ENCODE measurements at regions of chr3 and their contacts with region 1.

Region 1: DNA sequence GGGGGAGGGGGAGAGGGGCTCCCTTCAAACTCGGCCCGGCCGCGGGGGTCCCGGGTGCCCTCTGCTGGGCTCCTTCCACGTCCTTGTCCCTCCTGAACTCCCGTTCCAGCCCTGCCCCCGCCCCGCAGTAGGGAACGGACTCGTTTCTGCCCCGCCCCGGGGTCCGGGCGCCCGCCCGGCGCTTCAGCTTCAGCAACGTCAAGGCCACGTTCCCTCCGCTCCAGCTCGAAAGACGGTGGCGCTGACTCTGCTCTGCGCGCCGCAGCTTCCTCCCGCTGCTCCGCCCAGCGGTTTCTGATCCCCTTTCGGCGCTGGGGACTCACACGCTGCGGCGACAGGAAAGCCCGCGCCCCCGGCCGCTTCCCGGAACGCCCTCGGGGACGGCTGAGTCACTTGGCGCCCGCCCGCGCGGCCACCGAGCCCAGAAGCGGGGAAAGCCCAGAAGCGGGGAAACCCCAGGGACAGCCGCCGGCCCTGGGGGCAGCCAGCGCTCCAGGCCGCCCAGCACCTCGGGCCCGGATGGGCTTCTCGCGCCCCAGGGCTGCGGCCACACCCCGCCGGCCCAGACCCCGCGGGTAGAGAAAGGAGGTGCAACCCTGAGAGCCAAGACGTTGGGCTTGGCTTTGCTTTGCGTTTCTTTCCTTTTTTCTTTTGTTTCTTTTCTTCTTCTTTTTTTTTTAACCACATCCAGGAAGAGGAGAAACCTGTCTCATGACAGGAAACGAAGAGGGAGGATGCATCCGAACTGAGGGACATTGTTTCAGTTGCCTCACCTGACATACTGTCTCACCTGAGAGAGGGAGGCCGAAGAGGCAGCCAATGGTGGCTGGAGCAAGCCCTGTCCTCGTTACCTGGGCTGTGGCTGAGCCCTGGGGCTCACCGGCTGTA is 28.9 kb downstream of the ARHGAP31 start:
- DNase-seq: peak; percentile 90 to 95
- ATAC-seq: peak; percentile 85 to 94 (median 89)
- H3K4me3 ChIP-seq: peak overlapping the region; percentile 83
- H3K4me3 Mint-ChIP-seq: peak overlapping the region; percentile 98
- H3K27ac ChIP-seq: peak overlapping the region; percentile 92
- H3K27ac Mint-ChIP-seq: peak overlapping the region; percentile 97 to 98
- H3K4me1 ChIP-seq: peaks cover 15% of the 10 kb centered on the region
- H3K4me1 Mint-ChIP-seq: peaks cover 12 to 31% of the 10 kb centered on the region in 2 donors
- H3K27me3 ChIP-seq: no peaks in the 10 kb centered on the region
- H3K27me3 Mint-ChIP-seq: no peaks in the 10 kb centered on the region
- CTCF ChIP-seq: no peak

Region 2: GRCh38 chr3:119240591-119241434 is 82.3 kb before region 1 on chr3 and contains the start of gene B4GALT4:
- intact Hi-C with region 1: loop called (anchors 2 kb)
- DNase-seq: peak; percentile 79 to 80
- ATAC-seq: peak; percentile 78 to 91 (median 84)
- H3K4me3 ChIP-seq: peak within 1 kb of the TSS; percentile 49
- H3K4me3 Mint-ChIP-seq: peak within 1 kb of the TSS; percentile 96
- H3K27ac ChIP-seq: peak within 1 kb of the TSS; percentile 79
- H3K27ac Mint-ChIP-seq: peak within 1 kb of the TSS; percentile 92 to 96
- H3K4me1 ChIP-seq: peaks cover 37% of the 10 kb centered on the region
- H3K4me1 Mint-ChIP-seq: peaks cover 29 to 37% of the 10 kb centered on the region in 2 donors
- H3K27me3 ChIP-seq: no peaks in the 10 kb centered on the region
- H3K27me3 Mint-ChIP-seq: no peaks in the 10 kb centered on the region
- CTCF ChIP-seq: no peak
- total RNA-seq, gene B4GALT4: 35.1 to 54.1 (median 48.8) TPM

Region 3: DNA sequence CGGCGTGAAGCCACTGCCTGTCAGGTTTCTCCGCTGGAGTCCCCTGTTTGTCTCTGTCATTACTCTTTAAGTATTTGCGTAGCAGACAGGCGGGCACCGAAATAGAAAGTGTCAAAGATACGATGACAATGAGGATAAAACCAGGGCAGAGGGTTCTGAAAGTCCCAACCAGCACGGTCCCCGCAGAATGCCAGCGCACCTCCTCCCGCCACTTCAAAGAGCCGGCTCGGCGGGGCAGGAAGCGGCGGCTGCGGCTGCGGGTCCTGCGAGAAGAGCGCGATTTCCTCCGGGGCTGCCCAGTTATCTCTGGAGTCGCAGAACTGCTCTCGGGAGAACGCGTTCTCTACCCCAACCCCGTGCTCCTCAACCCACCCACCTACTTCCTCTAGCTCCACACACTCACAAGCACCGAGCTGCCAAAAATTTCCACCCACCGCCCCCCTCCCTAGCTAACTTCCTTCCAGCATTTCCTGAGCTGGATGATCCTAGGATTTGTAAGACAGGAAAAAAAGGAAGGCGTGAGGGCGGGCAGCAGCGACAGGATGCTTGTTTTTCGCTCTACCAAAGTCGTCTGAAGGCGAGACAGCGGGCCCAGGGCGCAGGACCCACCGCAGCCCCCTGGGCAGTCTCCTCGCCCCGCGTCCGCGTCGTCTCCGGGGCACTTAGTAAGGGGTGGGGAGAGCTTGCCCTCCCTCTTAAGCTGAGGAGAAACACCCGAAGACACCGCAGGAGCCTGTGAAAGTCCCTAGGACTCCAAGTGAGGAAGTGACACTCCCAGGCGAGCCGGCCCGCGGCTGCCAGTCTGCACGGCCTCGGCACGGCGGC is 29.0 kb before region 1 on chr3 and contains the start of gene ARHGAP31:
- intact Hi-C with region 1: loop called (anchors 1 kb)
- DNase-seq: peak; percentile 81 to 94
- ATAC-seq: peak; percentile 65 to 82 (median 70)
- H3K4me3 ChIP-seq: peak within 1 kb of the TSS; percentile 82
- H3K4me3 Mint-ChIP-seq: peak within 1 kb of the TSS; percentile 95
- H3K27ac ChIP-seq: peak within 1 kb of the TSS; percentile 99
- H3K27ac Mint-ChIP-seq: peak within 1 kb of the TSS; percentile 95 to 97
- H3K4me1 ChIP-seq: peaks cover 60% of the 10 kb centered on the region
- H3K4me1 Mint-ChIP-seq: peaks cover 72 to 74% of the 10 kb centered on the region in 2 donors
- H3K27me3 ChIP-seq: peaks cover 9% of the 10 kb centered on the region
- H3K27me3 Mint-ChIP-seq: peaks cover 9 to 15% of the 10 kb centered on the region in 2 donors
- CTCF ChIP-seq: no peak
- total RNA-seq, gene ARHGAP31: 4.1 to 8.4 (median 8.4) TPM